ENCODE measurements at regions of chr19 and their contacts with region 1.

Region 1: DNA sequence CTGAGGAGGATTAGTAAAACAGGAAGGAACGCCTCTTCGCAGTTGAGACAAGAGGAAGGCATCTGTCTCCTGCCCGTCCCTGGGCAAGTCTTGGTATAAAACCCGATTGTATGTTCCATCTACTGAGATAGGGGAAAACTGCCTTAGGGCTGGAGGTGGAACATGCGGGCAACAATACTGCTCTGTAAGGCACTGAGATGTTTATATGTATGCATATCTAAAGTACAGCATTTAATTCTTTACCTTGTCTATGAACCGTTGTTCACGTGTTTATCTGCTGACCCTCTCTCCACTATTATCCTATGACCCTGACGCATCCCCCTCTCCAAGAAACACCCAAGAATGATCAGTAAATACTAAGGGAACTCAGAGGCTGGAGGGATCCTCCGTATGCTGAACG is 722 bp upstream of the TIMM50 start:
- DNase-seq: no peak
- H3K4me3 ChIP-seq: peak overlapping the region; percentile 72 to 79
- H3K27ac ChIP-seq: peak overlapping the region; percentile 78
- H3K4me1 ChIP-seq: peaks cover 25% of the 10 kb centered on the region
- H3K27me3 ChIP-seq: no peaks in the 10 kb centered on the region
- CTCF ChIP-seq: no peak
- POLR2A ChIP-seq: no peak

Region 2: GRCh38 chr19:39532233-39533002 is 52.5 kb after region 1 on chr19 and contains the start of gene EID2B:
- intact Hi-C with region 1: loop called (anchors 5 kb)
- DNase-seq: peak in 1 of 2 donors; percentile 94
- H3K4me3 ChIP-seq: peak within 1 kb of the TSS; percentile 71 to 84
- H3K27ac ChIP-seq: peak within 1 kb of the TSS; percentile 82
- H3K4me1 ChIP-seq: peaks cover 16% of the 10 kb centered on the region
- H3K27me3 ChIP-seq: no peaks in the 10 kb centered on the region
- CTCF ChIP-seq: peak; percentile 96 to 99 (median 99)
- POLR2A ChIP-seq: peak in 1 of 2 donors; percentile 70
- total RNA-seq, gene EID2B: 3.7 TPM

Region 3: GRCh38 chr19:40006273-40006691 is 526.4 kb after region 1 on chr19:
- intact Hi-C with region 1: no loop called
- DNase-seq: no peak
- H3K4me3 ChIP-seq: no peak overlapping the region
- H3K27ac ChIP-seq: no peak overlapping the region
- H3K4me1 ChIP-seq: no peaks in the 10 kb centered on the region
- H3K27me3 ChIP-seq: no peaks in the 10 kb centered on the region
- CTCF ChIP-seq: no peak
- POLR2A ChIP-seq: no peak

Measured in vagina (tissue), 2 donors.